MCF 10A (cell line): ENCODE measurements at regions of chr17 and their contacts with region 1.

Region 1: GRCh38 chr17:67221062-67221998 is 23.7 kb downstream of the HELZ start:
- DNase-seq: peak; percentile 65
- H3K4me3 Mint-ChIP-seq: no peak overlapping the region
- H3K27ac Mint-ChIP-seq: no peak overlapping the region
- H3K4me1 Mint-ChIP-seq: peaks cover 33% of the 10 kb centered on the region
- H3K27me3 Mint-ChIP-seq: no peaks in the 10 kb centered on the region
- CTCF ChIP-seq: peak; percentile 47

Region 2: DNA sequence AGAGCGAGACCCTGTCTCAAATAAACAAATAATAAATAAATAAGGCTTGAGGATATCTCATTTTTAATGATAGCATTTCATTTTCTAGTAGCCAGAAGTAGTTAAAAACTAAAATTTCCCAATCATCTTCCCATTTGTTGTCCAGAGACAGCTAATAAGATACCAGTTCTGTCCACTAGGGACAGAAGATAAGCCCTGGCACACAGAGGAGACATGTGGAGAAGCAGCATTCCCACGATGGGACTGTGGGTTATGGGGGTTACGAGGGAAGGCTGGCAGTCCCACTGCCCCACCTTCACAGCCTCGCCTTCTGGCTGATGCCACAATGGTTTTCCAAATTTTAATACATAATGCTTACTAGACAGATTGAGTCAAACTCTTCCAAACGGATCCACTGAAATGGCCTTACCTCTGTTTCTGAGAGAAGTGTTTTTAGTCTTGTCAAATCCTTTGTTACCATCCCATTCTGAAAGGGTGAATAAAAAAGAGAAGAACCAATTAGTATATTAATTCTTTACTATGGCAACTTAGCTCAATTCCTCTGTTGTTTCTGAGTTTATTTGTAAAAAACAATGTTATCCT is 20.5 kb before region 1 on chr17:
- CTCF ChIA-PET with region 1: interaction called, 15 read pairs
- POLR2A ChIA-PET with region 1: interaction called, 4 read pairs
- intact Hi-C with region 1: no loop called
- DNase-seq: peak; percentile 31
- H3K4me3 Mint-ChIP-seq: no peak overlapping the region
- H3K27ac Mint-ChIP-seq: no peak overlapping the region
- H3K4me1 Mint-ChIP-seq: peaks cover 13% of the 10 kb centered on the region
- H3K27me3 Mint-ChIP-seq: no peaks in the 10 kb centered on the region
- CTCF ChIP-seq: peak; percentile 40

Region 3: DNA sequence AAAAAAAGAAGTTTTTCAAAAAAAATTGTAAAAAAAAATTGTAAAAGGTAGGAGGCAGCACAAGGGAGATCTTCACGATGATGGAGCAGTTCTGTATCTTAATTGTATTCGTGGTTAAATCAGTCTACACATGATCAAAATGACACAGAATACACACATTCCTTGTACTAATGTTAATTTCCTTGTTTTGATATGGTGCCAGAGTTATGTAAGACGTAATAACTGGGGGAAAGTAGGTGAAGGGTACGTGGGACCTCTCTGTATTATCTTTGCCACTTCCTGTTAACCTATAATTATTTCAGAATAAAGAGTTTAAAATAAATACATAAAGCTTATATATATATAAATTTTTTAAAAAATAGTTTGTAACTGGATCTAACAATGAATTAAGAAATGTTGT is 13.1 kb before region 1 on chr17:
- CTCF ChIA-PET with region 1: interaction called, 12 read pairs
- POLR2A ChIA-PET with region 1: interaction called, 7 read pairs
- intact Hi-C with region 1: no loop called
- DNase-seq: no peak
- H3K4me3 Mint-ChIP-seq: no peak overlapping the region
- H3K27ac Mint-ChIP-seq: peak overlapping the region; percentile 63
- H3K4me1 Mint-ChIP-seq: peaks cover 23% of the 10 kb centered on the region
- H3K27me3 Mint-ChIP-seq: no peaks in the 10 kb centered on the region
- CTCF ChIP-seq: no peak

Region 4: DNA sequence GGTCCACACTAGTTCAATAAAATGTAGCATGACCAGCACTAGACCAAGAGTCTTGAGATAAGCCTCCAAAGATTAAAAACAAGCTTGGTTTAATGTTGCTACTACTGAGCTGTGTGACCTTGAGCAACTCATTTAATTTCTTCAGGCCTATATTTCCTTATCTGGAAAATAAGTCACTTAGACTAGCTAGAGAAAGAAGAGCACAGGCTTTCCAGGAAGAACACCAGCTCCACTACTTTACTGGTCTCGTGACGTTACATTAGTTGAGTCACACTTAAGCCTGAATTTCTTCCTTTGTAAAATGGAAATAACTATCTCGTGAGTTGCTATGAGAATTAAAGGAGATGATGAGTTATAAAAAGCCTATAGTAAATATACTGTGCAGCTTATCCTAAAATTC is 18.3 kb after region 1 on chr17:
- CTCF ChIA-PET with region 1: interaction called, 11 read pairs
- POLR2A ChIA-PET with region 1: interaction called, 15 read pairs
- intact Hi-C with region 1: no loop called
- DNase-seq: peak; percentile 25
- H3K4me3 Mint-ChIP-seq: peak overlapping the region; percentile 47
- H3K27ac Mint-ChIP-seq: peak overlapping the region; percentile 31
- H3K4me1 Mint-ChIP-seq: peaks cover 48% of the 10 kb centered on the region
- H3K27me3 Mint-ChIP-seq: no peaks in the 10 kb centered on the region
- CTCF ChIP-seq: no peak

Region 5: DNA sequence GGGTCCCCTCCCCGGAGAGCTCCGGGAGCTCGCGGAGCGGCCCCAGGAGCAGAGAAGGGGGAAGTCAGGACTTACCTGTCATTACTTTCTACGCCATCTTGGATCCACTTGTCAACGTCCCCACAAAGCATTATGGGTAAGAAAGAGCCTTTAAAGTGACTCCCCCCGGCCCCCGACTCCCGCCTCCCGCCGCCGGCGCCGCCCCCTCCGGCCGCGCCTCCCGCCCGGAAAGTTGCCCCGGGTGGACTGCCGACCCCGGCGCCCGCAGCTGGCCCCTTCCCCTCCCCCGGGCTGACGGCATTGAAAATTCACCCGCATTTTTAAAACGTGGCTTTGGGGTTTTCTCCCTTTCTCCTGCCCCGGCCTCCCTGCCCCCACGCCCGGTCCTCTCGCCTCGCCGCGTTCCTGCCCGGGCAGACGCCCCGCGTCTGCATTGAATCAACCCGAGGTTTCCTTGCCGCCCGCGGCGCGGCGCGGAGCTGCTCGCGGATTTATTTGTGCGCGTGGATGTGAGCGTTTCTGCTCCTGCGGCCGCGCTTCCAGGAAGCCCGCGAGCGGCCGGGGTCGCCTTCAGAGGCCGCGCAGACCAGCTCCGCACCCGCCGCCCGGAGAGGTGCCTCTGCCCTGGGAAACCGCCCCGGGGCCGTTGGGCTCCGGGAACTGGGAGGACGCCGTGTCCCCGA is 23.9 kb after region 1 on chr17 and contains the start of gene HELZ:
- CTCF ChIA-PET with region 1: interaction called, 11 read pairs
- POLR2A ChIA-PET with region 1: interaction called, 15 read pairs
- intact Hi-C with region 1: no loop called
- DNase-seq: peak; percentile 84
- H3K4me3 Mint-ChIP-seq: peak within 1 kb of the TSS; percentile 85
- H3K27ac Mint-ChIP-seq: peak within 1 kb of the TSS; percentile 91
- H3K4me1 Mint-ChIP-seq: peaks cover 42% of the 10 kb centered on the region
- H3K27me3 Mint-ChIP-seq: no peaks in the 10 kb centered on the region
- CTCF ChIP-seq: no peak
- total RNA-seq, gene HELZ: 56.7 and 71.7 TPM in 2 replicates

Region 6: GRCh38 chr17:67293251-67294203 is 72.2 kb after region 1 on chr17:
- CTCF ChIA-PET with region 1: interaction called, 95 read pairs
- POLR2A ChIA-PET with region 1: interaction called, 7 read pairs
- intact Hi-C with region 1: loop called (anchors 1 kb)
- DNase-seq: peak; percentile 74
- H3K4me3 Mint-ChIP-seq: no peak overlapping the region
- H3K27ac Mint-ChIP-seq: no peak overlapping the region
- H3K4me1 Mint-ChIP-seq: no peaks in the 10 kb centered on the region
- H3K27me3 Mint-ChIP-seq: no peaks in the 10 kb centered on the region
- CTCF ChIP-seq: peak; percentile 73